Activated T-helper 2 cell treated with anti-CD3 and anti-CD28 coated beads, Interferon-gamma antibody, Interleukin-2, Interleukin-4, amounts not matched to agents 10 μg/mL and 5 μg/mL and 100 μg/mL, durations not matched to agents 14 hours and 24 hours and 36 hours (primary cell): ENCODE measurements at regions of chr2 and their contacts with region 1.

Region 1: DNA sequence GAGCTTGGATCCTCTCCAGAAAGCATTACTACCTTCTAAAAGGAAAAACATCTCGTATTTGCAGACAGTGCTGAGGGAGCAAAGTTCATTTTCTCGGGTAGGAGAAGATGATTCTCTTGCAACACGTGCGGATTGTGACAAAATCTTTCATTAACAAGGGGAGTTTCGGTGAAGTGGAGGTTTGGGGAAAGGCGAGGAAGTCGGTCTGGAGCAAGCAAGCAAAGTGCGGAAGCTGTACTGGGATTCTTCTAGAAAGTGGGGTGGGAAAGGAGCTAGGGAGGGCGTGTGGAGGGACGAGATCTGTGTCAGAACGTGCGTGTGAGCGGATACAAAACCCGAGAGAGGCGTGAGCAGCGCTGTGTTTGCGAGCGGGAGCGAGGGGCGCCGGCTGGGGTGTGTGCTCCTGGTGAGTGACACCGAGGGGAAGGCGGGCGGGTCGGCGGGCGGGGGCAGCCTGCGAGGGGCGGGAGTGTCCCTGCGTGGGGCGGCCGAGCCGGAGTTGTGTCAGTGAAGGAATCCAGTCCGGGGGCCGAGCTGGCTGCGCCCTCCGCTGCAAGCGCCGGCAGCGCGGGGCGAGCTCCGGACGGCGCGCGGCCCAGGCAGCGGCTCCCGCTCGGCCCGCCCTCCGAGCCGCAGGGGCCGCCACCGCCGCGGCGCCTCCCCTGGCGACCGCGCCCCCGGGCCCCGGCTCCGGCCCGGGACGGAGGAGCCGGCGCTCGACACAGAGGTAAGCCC is at the start of gene SPATS2L:
- DNase-seq: peak; percentile 48
- H3K4me3 Mint-ChIP-seq: peak within 1 kb of the TSS; percentile 92
- H3K27ac Mint-ChIP-seq: peak within 1 kb of the TSS; percentile 91
- H3K4me1 Mint-ChIP-seq: peaks cover 40% of the 10 kb centered on the region
- H3K27me3 Mint-ChIP-seq: peaks cover 12% of the 10 kb centered on the region
- total RNA-seq, gene SPATS2L: 57.5 and 62.2 TPM in 2 replicates

Region 2: DNA sequence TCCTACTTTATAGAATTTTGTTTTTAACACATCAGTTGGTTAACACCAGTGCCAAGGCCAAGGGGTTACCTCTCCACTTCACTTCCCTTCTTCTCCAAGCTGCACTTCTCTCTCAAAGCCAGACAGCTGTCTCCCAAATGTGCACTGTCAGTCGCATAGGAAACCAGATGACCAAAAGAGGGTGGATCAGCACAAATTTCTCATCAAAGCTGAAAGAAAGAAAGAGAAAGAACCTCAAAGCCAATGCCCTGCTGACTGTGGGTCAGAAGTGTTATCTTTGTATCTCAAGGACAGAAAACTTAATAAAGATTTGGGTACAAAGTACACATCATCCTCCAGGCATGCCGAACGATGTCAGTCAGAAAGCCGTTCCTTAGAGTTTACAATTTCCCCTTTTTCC is 32.3 kb after region 1 on chr2:
- intact Hi-C with region 1: loop called (anchors 5 kb)
- DNase-seq: no peak
- H3K4me3 Mint-ChIP-seq: no peak overlapping the region
- H3K27ac Mint-ChIP-seq: no peak overlapping the region
- H3K4me1 Mint-ChIP-seq: peaks cover 23% of the 10 kb centered on the region
- H3K27me3 Mint-ChIP-seq: no peaks in the 10 kb centered on the region

Region 3: DNA sequence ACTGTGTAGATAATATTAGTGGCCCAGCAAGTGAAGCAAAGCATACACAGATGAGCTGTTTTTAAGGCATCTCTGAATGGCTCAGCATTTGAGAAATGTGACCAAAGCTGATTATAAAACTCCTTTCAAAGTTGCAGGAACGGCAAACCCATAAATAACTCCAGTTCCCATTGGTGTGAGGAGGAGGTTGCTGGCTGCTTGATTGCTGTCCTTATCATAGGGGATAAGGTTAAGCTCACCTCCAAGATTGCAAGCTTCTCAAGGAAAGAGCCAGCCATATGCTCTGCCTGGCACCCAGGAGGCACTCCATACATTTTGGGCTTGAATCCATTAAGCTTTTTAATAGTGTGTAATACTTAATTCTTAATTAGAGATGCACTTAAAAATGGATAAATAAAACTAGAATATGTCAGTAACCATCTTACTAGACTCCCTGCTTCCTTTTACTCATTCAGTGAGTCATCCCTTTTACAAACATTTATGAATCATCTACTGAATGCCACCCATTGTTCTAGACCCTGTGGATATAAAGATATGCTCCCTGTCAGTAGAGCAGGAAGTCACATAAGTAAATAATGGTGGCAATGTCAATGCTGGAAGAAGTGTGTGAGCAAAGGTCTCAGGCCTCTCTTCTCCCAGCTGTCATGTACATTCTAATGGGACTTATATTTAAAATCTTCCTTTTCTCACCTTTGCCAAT is 99.4 kb after region 1 on chr2:
- intact Hi-C with region 1: loop called (anchors 5 kb)
- DNase-seq: no peak
- H3K4me3 Mint-ChIP-seq: no peak overlapping the region
- H3K27ac Mint-ChIP-seq: peak overlapping the region; percentile 67
- H3K4me1 Mint-ChIP-seq: peaks cover 50% of the 10 kb centered on the region
- H3K27me3 Mint-ChIP-seq: no peaks in the 10 kb centered on the region

Region 4: GRCh38 chr2:200525882-200526651 is 219.7 kb after region 1 on chr2 and contains the start of gene SGO2:
- intact Hi-C with region 1: loop called (anchors 5 kb)
- DNase-seq: peak; percentile 96
- H3K4me3 Mint-ChIP-seq: peak within 1 kb of the TSS; percentile 98
- H3K27ac Mint-ChIP-seq: peak within 1 kb of the TSS; percentile 94
- H3K4me1 Mint-ChIP-seq: peaks cover 30% of the 10 kb centered on the region
- H3K27me3 Mint-ChIP-seq: no peaks in the 10 kb centered on the region
- total RNA-seq, gene SGO2: 30.3 and 32.3 TPM in 2 replicates

Region 5: GRCh38 chr2:200677721-200678585 is 371.6 kb after region 1 on chr2:
- intact Hi-C with region 1: no loop called
- DNase-seq: no peak
- H3K4me3 Mint-ChIP-seq: no peak overlapping the region
- H3K27ac Mint-ChIP-seq: no peak overlapping the region
- H3K4me1 Mint-ChIP-seq: peaks cover 5% of the 10 kb centered on the region
- H3K27me3 Mint-ChIP-seq: peaks cover 22% of the 10 kb centered on the region